Prostate gland (tissue), 2 donors: ENCODE measurements at regions of chr7 and their contacts with region 1.

Region 1: GRCh38 chr7:1193593-1194424 is 33.8 kb upstream of the ZFAND2A start:
- DNase-seq: peak; percentile 46
- H3K4me3 ChIP-seq: no peak overlapping the region
- H3K27ac ChIP-seq: no peak overlapping the region
- H3K4me1 ChIP-seq: no peaks in the 10 kb centered on the region
- H3K27me3 ChIP-seq: peaks cover 1% of the 10 kb centered on the region
- CTCF ChIP-seq: peak in 3 of 4 experiments; percentile 52 to 75 (median 68)
- POLR2A ChIP-seq: no peak

Region 2: GRCh38 chr7:1312136-1313070 is 118.6 kb after region 1 on chr7:
- intact Hi-C with region 1: no loop called
- DNase-seq: no peak
- H3K4me3 ChIP-seq: no peak overlapping the region
- H3K27ac ChIP-seq: no peak overlapping the region
- H3K4me1 ChIP-seq: no peaks in the 10 kb centered on the region
- H3K27me3 ChIP-seq: no peaks in the 10 kb centered on the region
- CTCF ChIP-seq: no peak
- POLR2A ChIP-seq: no peak

Region 3: DNA sequence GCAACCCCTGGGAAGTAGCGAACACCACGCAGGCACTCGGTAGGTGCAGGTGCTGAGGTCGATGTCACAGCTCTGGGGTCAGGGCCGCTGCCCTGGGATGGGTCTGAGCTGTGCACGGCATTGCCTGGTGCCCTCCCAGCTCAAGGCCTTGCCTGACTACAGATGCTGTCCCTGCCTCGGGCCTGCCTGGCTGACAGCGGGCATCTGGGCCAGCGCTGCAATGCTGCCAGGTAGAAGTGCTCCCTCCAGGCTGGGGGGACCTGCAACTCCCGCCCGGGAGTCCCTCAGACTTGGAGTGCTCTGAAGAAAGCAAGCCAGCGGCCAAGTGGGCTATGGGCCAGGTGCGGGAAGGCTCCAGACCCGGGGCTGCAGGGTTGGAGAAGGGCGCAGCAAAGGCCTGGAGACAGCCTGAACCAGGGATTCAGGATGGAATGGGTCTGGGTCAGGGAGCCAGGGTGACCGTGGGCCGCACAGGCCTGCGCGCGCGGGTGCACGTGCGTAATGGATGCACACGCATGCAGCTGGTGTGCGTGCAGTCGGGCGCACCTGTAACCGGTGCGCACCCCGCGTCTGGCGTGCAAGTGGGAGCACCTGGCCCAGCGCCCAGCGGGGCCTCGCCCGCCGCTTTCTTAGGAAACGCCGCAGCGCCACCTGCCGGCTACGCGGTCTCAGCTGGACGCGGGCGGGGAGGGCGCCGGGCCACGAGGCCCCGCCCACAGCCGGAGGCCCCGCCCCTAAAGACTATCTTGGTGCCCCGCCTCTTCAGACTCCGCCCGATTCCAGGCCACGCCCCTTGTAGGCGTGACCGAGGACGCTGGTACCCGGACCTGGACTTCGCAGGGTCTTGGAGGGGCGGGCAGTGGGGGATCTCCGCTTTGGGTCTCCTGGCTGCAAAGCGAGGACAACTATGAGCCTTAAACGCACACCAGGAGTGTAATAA is 218.8 kb after region 1 on chr7:
- intact Hi-C with region 1: loop called (anchors 10 kb)
- DNase-seq: peak; percentile 71
- H3K4me3 ChIP-seq: no peak overlapping the region
- H3K27ac ChIP-seq: no peak overlapping the region
- H3K4me1 ChIP-seq: no peaks in the 10 kb centered on the region
- H3K27me3 ChIP-seq: peaks cover 9% of the 10 kb centered on the region
- CTCF ChIP-seq: peak; percentile 69 to 84 (median 80)
- POLR2A ChIP-seq: no peak

Region 4: DNA sequence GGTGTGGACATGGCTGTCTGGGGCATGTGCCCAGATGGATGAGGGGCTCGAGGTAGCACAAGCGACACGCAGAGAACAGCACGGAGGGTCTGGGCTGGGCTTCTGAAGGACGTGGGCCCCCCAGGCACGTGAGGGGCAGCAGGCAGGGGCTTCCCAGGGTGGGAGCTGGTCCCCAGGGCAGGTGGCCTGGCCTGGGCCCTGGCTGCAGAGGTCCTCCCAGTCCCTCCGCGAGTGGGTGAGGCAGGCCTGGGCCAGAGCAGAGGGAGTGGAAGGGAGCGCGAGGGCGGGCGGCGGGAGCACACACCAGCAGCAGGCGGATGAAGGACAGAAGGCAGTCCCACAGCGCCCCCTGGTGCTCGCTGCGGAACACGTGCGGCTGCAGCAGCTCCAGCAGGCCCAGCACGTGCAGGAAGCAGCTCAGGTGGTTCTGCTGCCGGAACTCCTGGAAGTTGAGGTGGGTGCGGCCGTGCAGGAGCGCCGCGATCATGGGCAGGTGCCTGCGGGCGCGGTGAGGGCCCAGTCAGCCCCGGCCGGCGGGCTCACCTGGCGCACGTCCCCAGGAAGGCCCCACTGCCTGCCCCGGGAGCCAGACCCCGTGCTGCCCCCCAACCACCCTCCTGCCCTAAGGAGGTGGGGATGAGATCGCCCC is 280.2 kb after region 1 on chr7:
- intact Hi-C with region 1: loop called (anchors 10 kb)
- DNase-seq: peak; percentile 91
- H3K4me3 ChIP-seq: no peak overlapping the region
- H3K27ac ChIP-seq: no peak overlapping the region
- H3K4me1 ChIP-seq: no peaks in the 10 kb centered on the region
- H3K27me3 ChIP-seq: no peaks in the 10 kb centered on the region
- CTCF ChIP-seq: peak; percentile 94 to 98 (median 96)
- POLR2A ChIP-seq: no peak